ENCODE measurements at regions of chr6 and their contacts with region 1.

Region 1: DNA sequence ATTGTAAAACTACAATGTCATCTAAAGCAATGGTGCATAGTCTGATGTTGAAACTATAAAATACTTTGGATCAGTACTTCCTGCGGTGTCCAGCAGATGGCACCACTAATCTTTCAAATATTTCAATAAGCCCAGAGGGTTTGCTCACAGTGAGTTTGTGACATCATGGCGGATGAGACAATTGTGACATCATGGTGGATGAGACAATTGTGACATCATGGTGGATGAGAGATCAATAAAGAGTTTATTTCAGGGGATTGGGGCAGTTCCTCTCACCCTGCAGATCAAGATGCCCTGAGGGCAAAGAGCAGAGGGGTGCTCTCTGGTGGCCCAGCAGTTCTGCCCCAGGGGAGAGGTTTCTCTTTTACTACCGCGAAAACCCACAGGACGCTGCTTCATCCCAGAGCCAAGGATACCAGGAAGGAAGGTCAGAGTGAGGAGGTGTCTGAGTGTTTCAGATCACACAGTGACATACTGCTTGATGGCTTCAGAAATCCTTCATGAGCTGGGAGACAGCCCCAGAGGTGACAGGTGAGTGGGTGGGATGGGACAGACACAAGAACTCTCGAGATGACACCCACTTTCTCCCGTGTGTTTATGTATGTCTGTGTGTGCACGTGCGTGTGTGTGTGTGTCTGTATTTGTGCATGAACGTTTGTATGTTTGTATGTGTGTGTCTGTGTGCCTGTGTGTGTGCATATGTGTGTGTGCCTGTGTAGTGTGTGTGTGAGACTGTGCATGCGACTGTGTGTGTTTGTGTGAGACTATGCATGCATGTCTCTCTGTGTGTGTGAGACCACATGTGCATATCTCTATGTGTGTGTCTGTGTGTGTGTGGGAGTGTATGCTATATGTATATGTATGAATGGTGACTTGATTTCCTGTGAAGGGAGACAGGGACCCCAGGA is 7.3 kb upstream of the ULBP2 start:
- DNase-seq: peak in 3 of 10 donors; percentile 49 to 80 (median 58)
- H3K4me3 ChIP-seq: no peak overlapping the region
- H3K27ac ChIP-seq: no peak overlapping the region
- H3K27me3 ChIP-seq: peaks cover 0 to 98% (median 65%) of the 10 kb centered on the region in 45 donors
- CTCF ChIP-seq: peak; percentile 80 to 97 (median 88)

Region 2: GRCh38 chr6:150016324-150017185 is 82.1 kb after region 1 on chr6:
- intact Hi-C with region 1: loop called (anchors 2 kb)
- DNase-seq: peak in 7 of 10 donors; percentile 54 to 82 (median 72)
- H3K4me3 ChIP-seq: no peak overlapping the region
- H3K27ac ChIP-seq: no peak overlapping the region
- H3K27me3 ChIP-seq: peaks cover 2 to 78% (median 57%) of the 10 kb centered on the region in 45 donors
- CTCF ChIP-seq: peak; percentile 60 to 92 (median 82)

Region 3: GRCh38 chr6:150068720-150069648 is 134.5 kb after region 1 on chr6 and contains the start of gene ULBP3:
- intact Hi-C with region 1: loop called in 1 of 2 experiments (anchors 5 kb)
- DNase-seq: peak; percentile 9 to 84 (median 56)
- H3K4me3 ChIP-seq: peak within 1 kb of the TSS; percentile 51 to 80 (median 70)
- H3K27ac ChIP-seq: peak within 1 kb of the TSS in 33 of 59 donors; percentile 1 to 64 (median 38)
- H3K27me3 ChIP-seq: peaks cover 0 to 6% (median 0%) of the 10 kb centered on the region in 45 donors
- CTCF ChIP-seq: peak in 45 of 56 donors; percentile 17 to 63 (median 41)
- total RNA-seq, gene ULBP3: 0.53 to 5.3 (median 2.0) TPM in 115 of 120 experiments, not detected in the others

Measured in dorsolateral prefrontal cortex (tissue), 120 donors.